ENCODE measurements at regions of chr1 and their contacts with region 1.

Region 1: GRCh38 chr1:203625628-203626019 is 1.0 kb upstream of the ATP2B4 start:
- DNase-seq: peak in 1 of 5 donors; percentile 33
- ATAC-seq: peak; percentile 19 to 52 (median 32)
- H3K4me3 ChIP-seq: peak overlapping the region in 5 of 12 donors; percentile 0 to 83 (median 77)
- H3K27ac ChIP-seq: peak overlapping the region in 9 of 12 donors; percentile 87 to 97 (median 93)
- H3K4me1 ChIP-seq: peaks cover 0 to 49% (median 21%) of the 10 kb centered on the region in 12 donors
- H3K27me3 ChIP-seq: no peaks in the 10 kb centered on the region
- CTCF ChIP-seq: peak in 11 of 12 donors; percentile 28 to 70 (median 55)
- POLR2A ChIP-seq: no peak

Region 2: GRCh38 chr1:203351037-203352013 is 274.3 kb before region 1 on chr1 and contains the start of gene FMOD:
- intact Hi-C with region 1: no loop called
- DNase-seq: peak in 3 of 5 donors; percentile 59 to 75 (median 71)
- ATAC-seq: peak; percentile 56 to 86 (median 70)
- H3K4me3 ChIP-seq: peak within 1 kb of the TSS in 10 of 12 donors; percentile 5 to 60 (median 40)
- H3K27ac ChIP-seq: peak within 1 kb of the TSS in 11 of 12 donors; percentile 7 to 86 (median 48)
- H3K4me1 ChIP-seq: peaks cover 0 to 31% (median under 1%) of the 10 kb centered on the region in 12 donors
- H3K27me3 ChIP-seq: no peaks in the 10 kb centered on the region
- CTCF ChIP-seq: peak in 4 of 12 donors; percentile 11 to 32 (median 28)
- POLR2A ChIP-seq: no peak
- total RNA-seq, gene FMOD: 6.1 to 33.2 (median 8.5) TPM

Region 3: GRCh38 chr1:203558064-203558760 is 67.4 kb before region 1 on chr1:
- intact Hi-C with region 1: loop called in 2 of 10 experiments (anchors 2 kb)
- DNase-seq: peak in 4 of 5 donors; percentile 56 to 84 (median 73)
- ATAC-seq: peak; percentile 41 to 69 (median 62)
- H3K4me3 ChIP-seq: peak overlapping the region in 4 of 12 donors; percentile 17 to 37 (median 20)
- H3K27ac ChIP-seq: peak overlapping the region; percentile 69 to 98 (median 92)
- H3K4me1 ChIP-seq: peaks cover 0 to 66% (median 39%) of the 10 kb centered on the region in 12 donors
- H3K27me3 ChIP-seq: no peaks in the 10 kb centered on the region
- CTCF ChIP-seq: no peak
- POLR2A ChIP-seq: no peak

Region 4: GRCh38 chr1:203584035-203584434 is 41.6 kb before region 1 on chr1:
- intact Hi-C with region 1: no loop called
- DNase-seq: no peak
- ATAC-seq: peak in 2 of 4 donors; percentile 13 to 59
- H3K4me3 ChIP-seq: no peak overlapping the region
- H3K27ac ChIP-seq: peak overlapping the region in 1 of 12 donors; percentile 19
- H3K4me1 ChIP-seq: peaks cover 0 to 6% (median 0%) of the 10 kb centered on the region in 12 donors
- H3K27me3 ChIP-seq: no peaks in the 10 kb centered on the region
- CTCF ChIP-seq: no peak
- POLR2A ChIP-seq: no peak

Region 5: DNA sequence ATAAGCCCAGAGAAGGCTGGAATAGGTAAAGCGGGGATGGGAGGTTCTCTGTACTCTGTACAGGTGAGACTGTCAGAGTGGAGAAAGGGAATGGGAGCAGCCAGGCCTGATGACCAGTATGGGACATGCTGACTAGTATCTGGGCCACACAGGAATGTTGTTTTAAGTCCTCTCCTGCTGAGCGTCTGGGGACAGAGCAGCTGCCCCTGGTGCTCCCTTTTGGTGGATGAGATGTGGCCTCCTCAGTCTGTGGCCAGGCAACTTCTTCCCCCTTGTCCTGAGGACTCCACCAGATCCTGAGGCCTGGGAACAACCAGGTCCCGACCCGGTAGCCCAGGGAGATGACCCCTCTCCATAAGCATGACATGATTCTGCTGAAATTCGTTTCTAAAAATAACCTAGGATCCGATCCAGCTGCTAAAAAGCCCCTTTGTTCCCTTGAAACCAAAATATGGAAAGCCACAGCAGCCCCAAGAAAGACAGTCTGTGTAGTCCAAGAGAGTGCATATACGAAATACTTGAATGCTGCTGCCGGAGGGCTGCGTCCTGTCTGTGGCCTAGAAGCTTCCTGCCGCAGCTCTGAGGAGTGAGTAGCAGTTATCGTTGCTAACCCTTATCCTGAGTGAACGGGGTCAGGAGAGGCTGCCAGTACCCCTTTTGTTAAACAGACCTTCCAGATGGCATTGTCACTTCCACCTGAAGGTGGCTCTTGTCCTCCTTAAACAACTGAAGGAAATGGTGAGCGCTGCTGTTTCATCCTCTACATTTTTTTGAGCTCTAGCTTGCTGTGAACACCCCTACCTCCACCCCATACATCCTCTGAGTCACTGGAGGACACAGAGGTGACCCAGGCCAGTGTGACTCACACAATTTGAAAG is 48.2 kb after region 1 on chr1:
- intact Hi-C with region 1: loop called in 5 of 10 experiments (anchors 5 kb)
- DNase-seq: peak; percentile 50 to 80 (median 67)
- ATAC-seq: peak; percentile 45 to 87 (median 83)
- H3K4me3 ChIP-seq: peak overlapping the region in 2 of 12 donors; percentile 10 to 13
- H3K27ac ChIP-seq: peak overlapping the region; percentile 58 to 91 (median 84)
- H3K4me1 ChIP-seq: peaks cover 20 to 99% (median 84%) of the 10 kb centered on the region in 12 donors
- H3K27me3 ChIP-seq: no peaks in the 10 kb centered on the region
- CTCF ChIP-seq: peak in 5 of 12 donors; percentile 21 to 38 (median 34)
- POLR2A ChIP-seq: no peak

Region 6: DNA sequence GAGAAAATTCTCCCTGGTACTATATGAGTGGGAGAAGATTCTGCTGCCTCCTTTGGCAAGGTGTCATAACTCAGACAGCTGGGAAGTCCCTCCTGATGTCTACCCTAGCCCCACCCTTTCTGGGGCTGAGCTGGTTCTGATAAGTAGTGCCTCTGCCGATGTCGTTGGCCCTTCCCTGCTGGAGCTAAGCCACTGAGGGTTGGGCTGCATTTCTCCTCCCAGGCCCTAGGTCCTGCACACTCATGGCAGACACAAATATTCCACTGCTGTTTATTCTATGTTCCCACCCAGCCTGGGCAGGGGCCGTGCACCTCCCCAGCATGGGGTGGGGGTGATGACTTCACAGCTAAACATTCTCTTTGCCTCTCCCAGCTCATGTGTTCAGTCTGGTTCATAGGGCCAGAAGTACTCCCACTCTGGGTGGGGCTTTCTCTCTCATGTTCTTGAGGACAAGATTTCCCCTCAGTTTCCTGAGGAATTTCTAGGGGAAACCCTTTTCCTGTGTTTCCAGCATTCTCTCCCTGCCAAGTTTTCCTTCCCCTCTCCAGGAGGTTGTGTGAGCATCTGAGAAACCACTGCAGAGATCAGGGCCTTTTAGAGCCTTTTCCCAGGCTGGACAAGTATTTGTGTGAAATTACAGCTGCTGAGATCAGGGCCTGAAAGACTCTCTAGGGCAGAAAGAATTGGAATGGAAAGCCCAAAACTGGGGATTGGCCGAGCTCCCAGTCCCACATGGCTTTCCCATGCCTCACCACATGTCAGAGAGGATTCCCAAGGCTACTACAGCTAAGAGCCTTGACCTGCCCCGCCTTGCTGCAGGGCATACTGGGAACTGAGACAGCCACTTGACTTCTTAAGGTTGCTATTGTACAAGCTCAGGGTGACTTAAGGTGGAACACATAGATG is 67.2 kb after region 1 on chr1:
- intact Hi-C with region 1: loop called in 9 of 10 experiments (anchors 1 to 5 kb)
- DNase-seq: peak; percentile 84 to 92 (median 87)
- ATAC-seq: peak; percentile 82 to 92 (median 88)
- H3K4me3 ChIP-seq: peak overlapping the region in 2 of 12 donors; percentile 1 to 3
- H3K27ac ChIP-seq: peak overlapping the region; percentile 42 to 89 (median 76)
- H3K4me1 ChIP-seq: peaks cover 10 to 89% (median 66%) of the 10 kb centered on the region in 12 donors
- H3K27me3 ChIP-seq: no peaks in the 10 kb centered on the region
- CTCF ChIP-seq: peak in 3 of 12 donors; percentile 8 to 17 (median 10)
- POLR2A ChIP-seq: peak in 1 of 2 donors; percentile 22

Region 7: DNA sequence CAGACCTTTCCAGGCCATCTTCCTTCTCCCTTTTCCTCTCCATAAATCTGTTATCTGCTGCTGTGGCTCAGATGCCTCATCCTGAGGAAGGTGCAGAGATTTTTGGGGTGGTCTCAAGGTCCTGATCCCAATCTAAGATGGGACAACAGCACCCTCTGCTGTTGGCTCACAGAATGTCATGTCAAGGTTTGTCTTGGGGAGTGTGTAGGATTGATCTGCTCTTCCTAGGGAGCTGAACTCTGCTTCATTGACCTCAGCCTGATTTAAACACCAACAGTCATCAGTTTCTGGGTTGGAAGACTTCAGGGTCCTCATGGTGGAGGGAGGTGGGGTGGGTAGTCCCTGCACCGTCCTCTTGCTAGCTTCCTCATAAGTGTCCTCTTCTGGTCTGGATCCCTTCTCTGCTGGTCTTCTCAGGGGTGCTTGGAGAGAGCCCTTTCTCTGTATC is 76.5 kb after region 1 on chr1:
- intact Hi-C with region 1: loop called in 3 of 10 experiments (anchors 2 to 5 kb)
- DNase-seq: peak in 1 of 5 donors; percentile 40
- ATAC-seq: peak; percentile 36 to 68 (median 62)
- H3K4me3 ChIP-seq: no peak overlapping the region
- H3K27ac ChIP-seq: peak overlapping the region in 1 of 12 donors; percentile 89
- H3K4me1 ChIP-seq: peaks cover 0 to 16% (median 8%) of the 10 kb centered on the region in 12 donors
- H3K27me3 ChIP-seq: no peaks in the 10 kb centered on the region
- CTCF ChIP-seq: peak; percentile 59 to 85 (median 78)
- POLR2A ChIP-seq: no peak

Region 8: GRCh38 chr1:203769505-203770343 is 144.1 kb after region 1 on chr1:
- intact Hi-C with region 1: loop called in 1 of 10 experiments (anchors 10 kb)
- DNase-seq: peak; percentile 63 to 85 (median 72)
- ATAC-seq: peak; percentile 81 to 95 (median 93)
- H3K4me3 ChIP-seq: peak overlapping the region in 7 of 12 donors; percentile 3 to 40 (median 18)
- H3K27ac ChIP-seq: peak overlapping the region in 8 of 12 donors; percentile 9 to 73 (median 42)
- H3K4me1 ChIP-seq: peaks cover 0 to 20% (median 4%) of the 10 kb centered on the region in 12 donors
- H3K27me3 ChIP-seq: no peaks in the 10 kb centered on the region
- CTCF ChIP-seq: no peak
- POLR2A ChIP-seq: no peak

Region 9: GRCh38 chr1:203795441-203796235 is 170.0 kb after region 1 on chr1 and contains the starts of genes ZBED6 and ZC3H11A:
- intact Hi-C with region 1: loop called in 1 of 10 experiments (anchors 5 kb)
- DNase-seq: peak; percentile 99 to 100 (median 99)
- ATAC-seq: peak; percentile 98 to 99 (median 98)
- H3K4me3 ChIP-seq: peak within 1 kb of the TSS; percentile 47 to 92 (median 82)
- H3K27ac ChIP-seq: peak within 1 kb of the TSS; percentile 89 to 98 (median 96)
- H3K4me1 ChIP-seq: peaks cover 8 to 52% (median 42%) of the 10 kb centered on the region in 12 donors
- H3K27me3 ChIP-seq: no peaks in the 10 kb centered on the region
- CTCF ChIP-seq: no peak
- POLR2A ChIP-seq: peak in 1 of 2 donors; percentile 63
- total RNA-seq, gene ZBED6: 7.1 to 19.6 (median 11.9) TPM
- total RNA-seq, gene ZC3H11A: 37.4 to 54.2 (median 43.5) TPM

Region 10: GRCh38 chr1:203839059-203839458 is 213.4 kb after region 1 on chr1:
- intact Hi-C with region 1: no loop called
- DNase-seq: no peak
- ATAC-seq: no peak
- H3K4me3 ChIP-seq: no peak overlapping the region
- H3K27ac ChIP-seq: peak overlapping the region in 2 of 12 donors; percentile 0 to 22
- H3K4me1 ChIP-seq: peaks cover 0 to 7% (median 0%) of the 10 kb centered on the region in 12 donors
- H3K27me3 ChIP-seq: no peaks in the 10 kb centered on the region
- CTCF ChIP-seq: no peak
- POLR2A ChIP-seq: no peak

Measured in heart left ventricle (tissue), 16 donors.